GM10248 (cell line): ENCODE measurements at regions of chr17 and their contacts with region 1.

Region 1: DNA sequence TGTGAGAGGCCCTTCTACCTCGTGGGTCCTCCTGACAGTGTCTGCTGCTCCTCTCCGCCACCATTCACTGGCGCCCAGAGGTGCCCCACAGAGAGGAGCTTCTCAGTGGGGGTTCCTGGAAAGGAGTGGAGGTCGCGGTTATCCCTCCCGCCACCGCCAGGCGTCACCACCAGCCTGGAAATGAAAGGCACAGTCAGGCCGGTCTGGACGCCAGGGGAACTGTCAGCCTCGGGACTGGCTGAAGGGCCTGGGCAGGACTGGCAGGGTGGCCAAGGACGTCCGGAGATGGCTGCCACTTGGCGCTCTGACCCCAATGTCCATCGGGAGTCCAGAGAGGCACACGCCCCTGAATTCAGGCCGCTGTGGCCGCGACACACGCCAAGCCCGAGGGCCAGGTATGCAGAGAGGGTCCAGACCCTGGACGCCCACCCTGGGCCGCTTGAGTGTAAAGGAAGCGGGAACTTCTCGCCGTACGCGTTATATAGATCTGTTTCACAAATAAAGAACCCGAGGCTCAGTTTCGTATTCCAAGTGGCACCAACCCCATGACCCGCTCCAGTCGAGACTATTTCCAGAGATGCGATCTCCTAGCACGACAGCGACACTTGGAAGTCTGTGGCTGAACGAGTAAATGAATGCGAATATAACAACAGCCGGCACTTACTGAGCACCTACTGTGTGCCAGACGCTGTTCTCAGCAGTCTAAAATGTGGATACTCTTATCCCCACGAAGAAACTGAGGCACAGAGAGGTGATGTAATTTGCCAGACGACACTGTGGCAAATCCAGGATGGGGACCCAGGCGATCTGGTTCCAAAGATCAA is 7.6 kb upstream of the NXPH3 start:
- DNase-seq: peak; percentile 83
- CTCF ChIP-seq: peak; percentile 98

Region 2: DNA sequence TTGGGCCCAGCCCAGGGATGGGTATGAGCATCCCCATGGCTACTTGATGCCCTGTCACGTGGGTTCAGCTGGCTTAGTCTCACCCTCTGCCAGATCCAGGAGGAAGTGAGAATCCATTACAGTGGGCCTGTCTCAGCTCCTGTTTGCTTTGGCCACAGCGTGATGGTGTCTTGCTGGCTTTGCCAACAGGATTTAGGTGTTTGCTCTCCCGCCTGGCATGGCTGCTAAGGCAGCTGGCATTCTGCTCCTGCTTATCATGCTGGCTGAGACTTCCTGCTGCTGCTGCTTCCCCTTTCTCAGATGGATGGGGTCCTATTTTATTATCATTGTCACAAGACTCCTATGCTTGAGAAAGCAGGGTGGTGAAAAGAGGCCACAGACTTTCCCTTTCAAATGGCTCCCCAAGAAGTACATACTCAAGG is 811.2 kb before region 1 on chr17:
- CTCF ChIA-PET with region 1: no interaction called
- POLR2A ChIA-PET with region 1: no interaction called
- DNase-seq: no peak
- CTCF ChIP-seq: no peak

Region 3: GRCh38 chr17:49588726-49589576 is 20.9 kb after region 1 on chr17:
- CTCF ChIA-PET with region 1: interaction called, 15 read pairs
- POLR2A ChIA-PET with region 1: no interaction called
- DNase-seq: no peak
- CTCF ChIP-seq: no peak

Region 4: GRCh38 chr17:49603238-49603637 is 35.2 kb after region 1 on chr17:
- CTCF ChIA-PET with region 1: interaction called, 22 read pairs
- POLR2A ChIA-PET with region 1: no interaction called
- DNase-seq: no peak
- CTCF ChIP-seq: no peak

Region 5: DNA sequence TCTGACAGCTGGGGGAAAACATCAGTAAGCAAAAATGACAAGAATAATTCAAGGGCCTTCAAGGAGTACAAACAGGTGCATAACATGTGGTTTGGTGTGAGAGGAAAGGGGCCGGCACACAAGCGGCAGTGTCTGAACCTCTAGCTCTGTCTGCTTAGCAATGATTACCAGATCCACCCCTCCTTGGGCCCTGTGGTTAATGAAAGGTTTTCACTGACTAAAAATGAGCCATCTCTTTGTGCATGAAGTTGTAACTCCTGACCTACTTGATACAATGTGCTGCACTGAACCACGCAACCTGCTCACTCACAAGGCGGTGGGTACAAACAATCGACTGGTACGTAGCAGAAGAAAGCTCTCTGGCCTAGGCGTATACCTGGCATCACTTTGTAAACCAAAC is 180.7 kb after region 1 on chr17:
- CTCF ChIA-PET with region 1: interaction called, 10 read pairs
- POLR2A ChIA-PET with region 1: no interaction called
- DNase-seq: peak; percentile 82
- CTCF ChIP-seq: no peak

Region 6: DNA sequence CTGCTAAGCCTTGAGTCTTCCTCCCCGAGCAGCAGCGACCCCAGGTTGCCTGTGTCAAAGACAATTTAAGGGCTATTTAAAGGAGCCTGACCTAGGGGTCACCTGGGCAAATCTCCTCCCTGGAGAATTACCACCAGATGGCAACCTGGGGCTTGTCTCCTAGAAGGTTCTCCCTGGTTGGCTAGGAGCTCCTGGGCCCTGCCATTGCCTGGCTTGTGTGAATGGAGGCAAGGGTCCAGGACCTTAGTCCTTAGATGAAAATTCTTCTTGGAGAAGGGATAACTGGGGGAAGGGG is 331.1 kb after region 1 on chr17:
- CTCF ChIA-PET with region 1: no interaction called
- POLR2A ChIA-PET with region 1: no interaction called
- DNase-seq: no peak
- CTCF ChIP-seq: no peak